A673 (cell line): ENCODE measurements at regions of chr15 and their contacts with region 1.

Region 1: GRCh38 chr15:37134699-37135131 is 34.4 kb upstream of the MEIS2 start:
- DNase-seq: peak; percentile 43
- H3K4me3 ChIP-seq: no peak overlapping the region
- H3K27ac ChIP-seq: no peak overlapping the region
- H3K4me1 ChIP-seq: no peaks in the 10 kb centered on the region
- H3K27me3 ChIP-seq: no peaks in the 10 kb centered on the region
- CTCF ChIP-seq: peak; percentile 70

Region 2: DNA sequence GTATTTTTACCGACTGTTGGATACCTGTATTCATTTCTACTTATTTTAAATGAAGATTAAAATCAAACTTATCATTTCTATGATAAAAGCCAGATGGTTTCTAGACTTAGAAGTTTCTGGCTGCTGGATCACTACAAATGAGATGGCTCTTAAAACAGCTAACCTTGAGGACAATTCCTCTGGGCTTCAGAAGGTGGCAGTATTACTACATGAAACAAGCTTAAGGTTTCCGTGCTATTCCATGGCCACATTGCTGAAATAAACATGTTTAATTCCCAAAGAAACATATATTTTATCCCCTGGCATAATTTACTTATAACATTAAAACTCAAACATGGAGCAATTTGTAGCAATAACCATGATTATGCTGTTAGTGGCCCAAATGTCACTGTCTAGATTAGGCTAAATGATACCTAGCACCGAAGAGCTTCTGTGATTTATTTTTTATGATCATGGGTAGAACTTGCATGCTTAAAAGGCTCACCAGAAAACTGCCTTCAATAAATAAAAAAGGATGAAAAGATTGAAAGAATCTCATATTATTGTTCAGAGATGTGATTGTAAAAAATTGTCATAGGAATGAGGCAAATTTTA is 1845.6 kb before region 1 on chr15:
- CTCF ChIA-PET with region 1: no interaction called
- POLR2A ChIA-PET with region 1: no interaction called
- intact Hi-C with region 1: loop called (anchors 10 kb)
- DNase-seq: peak; percentile 69
- H3K4me3 ChIP-seq: no peak overlapping the region
- H3K27ac ChIP-seq: no peak overlapping the region
- H3K4me1 ChIP-seq: peaks cover 9% of the 10 kb centered on the region
- H3K27me3 ChIP-seq: no peaks in the 10 kb centered on the region
- CTCF ChIP-seq: peak; percentile 84

Region 3: DNA sequence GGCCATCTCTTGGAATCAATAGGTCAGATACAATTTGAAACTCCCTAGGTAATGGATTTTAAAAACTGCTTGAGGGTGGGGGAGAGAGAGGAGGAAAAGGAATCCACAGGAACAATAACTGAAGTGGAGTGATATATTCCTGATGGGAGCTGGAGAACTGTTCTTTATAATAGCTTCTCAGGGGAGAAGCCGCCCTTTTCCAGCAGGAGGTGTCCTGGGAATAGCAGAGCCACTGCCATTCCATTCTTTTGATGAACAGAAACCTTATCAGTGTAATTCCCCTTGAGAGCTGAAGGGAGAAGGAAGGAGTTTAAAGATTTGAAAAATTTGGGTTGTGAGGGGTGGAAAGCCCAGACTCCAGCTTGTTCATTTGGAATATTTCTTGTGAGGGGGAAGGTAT is 1083.8 kb before region 1 on chr15:
- CTCF ChIA-PET with region 1: no interaction called
- POLR2A ChIA-PET with region 1: no interaction called
- intact Hi-C with region 1: loop called (anchors 5 kb)
- DNase-seq: no peak
- H3K4me3 ChIP-seq: no peak overlapping the region
- H3K27ac ChIP-seq: no peak overlapping the region
- H3K4me1 ChIP-seq: no peaks in the 10 kb centered on the region
- H3K27me3 ChIP-seq: no peaks in the 10 kb centered on the region
- CTCF ChIP-seq: no peak

Region 4: DNA sequence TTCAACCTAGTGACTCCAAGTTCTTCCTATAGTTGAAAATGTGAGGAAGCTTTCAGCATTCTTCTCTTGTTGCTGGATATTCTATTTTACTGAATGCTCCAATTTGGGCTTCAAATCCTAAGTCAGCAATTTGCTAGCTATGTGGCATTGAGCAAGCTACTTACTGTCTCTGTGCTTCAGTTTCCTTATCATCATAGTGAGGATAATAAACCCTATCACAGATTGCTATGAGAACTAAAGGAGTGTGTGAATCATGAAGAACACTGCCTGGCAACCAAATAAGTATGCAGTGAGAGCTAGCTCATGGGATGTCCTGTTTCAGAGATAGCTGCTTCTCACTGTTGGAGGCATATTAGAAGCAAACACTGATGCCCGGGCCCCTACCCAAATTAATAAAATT is 719.1 kb before region 1 on chr15:
- CTCF ChIA-PET with region 1: no interaction called
- POLR2A ChIA-PET with region 1: no interaction called
- intact Hi-C with region 1: no loop called
- DNase-seq: no peak
- H3K4me3 ChIP-seq: no peak overlapping the region
- H3K27ac ChIP-seq: no peak overlapping the region
- H3K4me1 ChIP-seq: no peaks in the 10 kb centered on the region
- H3K27me3 ChIP-seq: no peaks in the 10 kb centered on the region
- CTCF ChIP-seq: no peak

Region 5: GRCh38 chr15:36501063-36501678 is 633.5 kb before region 1 on chr15:
- CTCF ChIA-PET with region 1: no interaction called
- POLR2A ChIA-PET with region 1: no interaction called
- intact Hi-C with region 1: loop called (anchors 2 kb)
- DNase-seq: peak; percentile 78
- H3K4me3 ChIP-seq: no peak overlapping the region
- H3K27ac ChIP-seq: no peak overlapping the region
- H3K4me1 ChIP-seq: peaks cover 4% of the 10 kb centered on the region
- H3K27me3 ChIP-seq: no peaks in the 10 kb centered on the region
- CTCF ChIP-seq: peak; percentile 75

Region 6: GRCh38 chr15:36883713-36884517 is 250.8 kb before region 1 on chr15:
- CTCF ChIA-PET with region 1: interaction called, 4 read pairs
- POLR2A ChIA-PET with region 1: no interaction called
- intact Hi-C with region 1: loop called (anchors 2 kb)
- DNase-seq: peak; percentile 90
- H3K4me3 ChIP-seq: no peak overlapping the region
- H3K27ac ChIP-seq: no peak overlapping the region
- H3K4me1 ChIP-seq: peaks cover 13% of the 10 kb centered on the region
- H3K27me3 ChIP-seq: peaks cover 57% of the 10 kb centered on the region
- CTCF ChIP-seq: peak; percentile 93

Region 7: DNA sequence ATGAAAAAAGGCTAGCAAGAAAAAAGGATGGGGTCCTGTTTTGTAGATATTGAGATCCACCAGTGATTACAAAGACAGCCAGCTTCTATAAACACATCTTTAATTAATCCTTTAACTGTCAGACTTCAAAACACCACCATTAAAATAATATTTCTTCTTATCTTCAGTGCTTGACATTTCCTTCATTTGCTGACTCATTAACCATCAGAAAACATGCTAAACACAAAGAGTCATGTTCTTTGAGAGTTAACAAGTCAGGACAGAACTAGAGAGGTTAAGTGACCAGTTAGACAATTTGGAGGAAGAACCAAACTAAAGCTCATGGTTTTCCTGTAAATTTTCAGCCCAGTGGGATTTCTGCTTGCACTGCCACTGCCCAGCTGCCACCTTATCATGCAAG is 145.8 kb before region 1 on chr15:
- CTCF ChIA-PET with region 1: no interaction called
- POLR2A ChIA-PET with region 1: no interaction called
- intact Hi-C with region 1: no loop called
- DNase-seq: no peak
- H3K4me3 ChIP-seq: no peak overlapping the region
- H3K27ac ChIP-seq: no peak overlapping the region
- H3K4me1 ChIP-seq: no peaks in the 10 kb centered on the region
- H3K27me3 ChIP-seq: no peaks in the 10 kb centered on the region
- CTCF ChIP-seq: no peak

Region 8: DNA sequence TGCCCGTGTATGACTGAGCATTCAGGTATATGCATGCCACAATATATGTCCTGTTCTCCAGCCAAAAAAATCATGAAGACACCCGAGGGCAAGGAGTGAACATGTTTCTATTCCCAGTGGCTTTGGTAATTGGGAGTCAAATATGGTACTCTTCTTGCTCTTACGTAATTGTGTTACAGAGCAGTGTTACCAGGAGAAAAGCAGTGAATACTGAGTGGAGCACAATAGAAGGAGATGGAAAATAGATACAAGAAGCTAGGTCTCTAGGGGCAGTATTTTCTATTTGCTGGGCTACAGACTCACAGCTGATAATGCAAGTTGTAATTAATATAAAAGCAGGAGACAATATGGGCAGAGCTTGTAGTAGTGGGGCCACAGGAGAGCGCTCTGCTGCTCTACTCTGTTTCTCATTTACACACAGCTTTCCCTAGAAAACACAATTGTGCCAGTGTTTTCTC is 47.6 kb before region 1 on chr15:
- CTCF ChIA-PET with region 1: no interaction called
- POLR2A ChIA-PET with region 1: no interaction called
- intact Hi-C with region 1: no loop called
- DNase-seq: no peak
- H3K4me3 ChIP-seq: no peak overlapping the region
- H3K27ac ChIP-seq: no peak overlapping the region
- H3K4me1 ChIP-seq: no peaks in the 10 kb centered on the region
- H3K27me3 ChIP-seq: no peaks in the 10 kb centered on the region
- CTCF ChIP-seq: no peak

Region 9: DNA sequence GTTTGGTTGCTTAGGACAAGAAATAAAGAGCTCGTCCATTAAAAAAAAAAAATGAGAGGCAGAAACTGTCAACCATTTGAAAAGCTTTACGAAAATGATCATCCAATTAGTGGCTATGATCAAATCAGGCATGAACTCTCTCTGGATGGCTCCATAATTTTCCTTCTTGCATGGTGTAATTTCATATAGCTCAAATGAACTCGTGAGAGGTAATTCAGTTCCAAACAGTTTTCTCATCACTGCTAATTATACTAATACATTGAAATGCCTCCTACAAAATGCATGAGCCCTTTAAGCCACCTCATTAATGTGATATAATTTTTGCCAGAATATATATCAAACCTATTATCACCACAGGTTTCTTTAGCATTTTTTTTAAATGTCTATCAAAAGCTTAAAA is 205.1 kb after region 1 on chr15:
- CTCF ChIA-PET with region 1: no interaction called
- POLR2A ChIA-PET with region 1: no interaction called
- intact Hi-C with region 1: no loop called
- DNase-seq: no peak
- H3K4me3 ChIP-seq: no peak overlapping the region
- H3K27ac ChIP-seq: no peak overlapping the region
- H3K4me1 ChIP-seq: no peaks in the 10 kb centered on the region
- H3K27me3 ChIP-seq: no peaks in the 10 kb centered on the region
- CTCF ChIP-seq: no peak

Region 10: DNA sequence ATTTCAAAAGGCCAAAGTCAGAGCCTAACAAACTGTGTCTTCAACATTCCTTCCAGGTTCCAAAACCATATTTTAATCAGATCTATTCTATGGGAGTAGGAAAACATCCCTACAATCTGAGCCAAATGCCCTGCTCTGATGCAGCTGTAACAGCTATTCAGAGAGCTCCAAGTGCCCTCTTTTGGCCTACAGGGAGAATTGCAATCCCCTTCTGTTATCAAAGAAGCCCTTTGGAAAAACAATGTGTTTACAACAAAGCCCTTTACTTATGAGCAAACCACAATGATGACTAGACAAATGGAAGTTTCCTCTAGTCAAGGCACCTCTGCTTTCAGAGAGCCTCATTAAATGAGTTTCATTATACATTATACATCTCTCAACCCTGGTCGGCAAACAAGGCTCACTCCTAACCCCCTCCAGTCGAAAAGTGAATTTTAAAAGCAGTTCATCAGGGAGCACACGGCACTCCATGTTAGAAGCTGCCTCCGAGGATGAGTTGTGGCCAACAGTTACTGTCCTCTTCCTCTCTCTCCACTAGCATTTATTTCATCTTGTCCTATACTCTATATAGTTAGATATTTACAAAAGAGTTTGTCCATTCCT is 757.2 kb after region 1 on chr15:
- CTCF ChIA-PET with region 1: interaction called, 16 read pairs
- POLR2A ChIA-PET with region 1: no interaction called
- intact Hi-C with region 1: loop called (anchors 10 kb)
- DNase-seq: peak; percentile 68
- H3K4me3 ChIP-seq: no peak overlapping the region
- H3K27ac ChIP-seq: no peak overlapping the region
- H3K4me1 ChIP-seq: no peaks in the 10 kb centered on the region
- H3K27me3 ChIP-seq: no peaks in the 10 kb centered on the region
- CTCF ChIP-seq: peak; percentile 89